ENCODE measurements at regions of chr6 and their contacts with region 1.

Region 1: GRCh38 chr6:27472617-27473400 is at the start of gene ZNF184:
- DNase-seq: peak; percentile 68 to 94 (median 80)
- ATAC-seq: peak; percentile 59
- H3K4me3 ChIP-seq: peak within 1 kb of the TSS; percentile 85
- H3K4me3 Mint-ChIP-seq: peak within 1 kb of the TSS; percentile 88
- H3K27ac ChIP-seq: peak within 1 kb of the TSS; percentile 88 to 96
- H3K27ac Mint-ChIP-seq: peak within 1 kb of the TSS; percentile 91
- H3K4me1 ChIP-seq: peaks cover 21% of the 10 kb centered on the region
- H3K4me1 Mint-ChIP-seq: peaks cover 53% of the 10 kb centered on the region
- H3K27me3 ChIP-seq: no peaks in the 10 kb centered on the region
- H3K27me3 Mint-ChIP-seq: no peaks in the 10 kb centered on the region
- CTCF ChIP-seq: no peak
- total RNA-seq, gene ZNF184: 19.6 to 21.1 TPM

Region 2: DNA sequence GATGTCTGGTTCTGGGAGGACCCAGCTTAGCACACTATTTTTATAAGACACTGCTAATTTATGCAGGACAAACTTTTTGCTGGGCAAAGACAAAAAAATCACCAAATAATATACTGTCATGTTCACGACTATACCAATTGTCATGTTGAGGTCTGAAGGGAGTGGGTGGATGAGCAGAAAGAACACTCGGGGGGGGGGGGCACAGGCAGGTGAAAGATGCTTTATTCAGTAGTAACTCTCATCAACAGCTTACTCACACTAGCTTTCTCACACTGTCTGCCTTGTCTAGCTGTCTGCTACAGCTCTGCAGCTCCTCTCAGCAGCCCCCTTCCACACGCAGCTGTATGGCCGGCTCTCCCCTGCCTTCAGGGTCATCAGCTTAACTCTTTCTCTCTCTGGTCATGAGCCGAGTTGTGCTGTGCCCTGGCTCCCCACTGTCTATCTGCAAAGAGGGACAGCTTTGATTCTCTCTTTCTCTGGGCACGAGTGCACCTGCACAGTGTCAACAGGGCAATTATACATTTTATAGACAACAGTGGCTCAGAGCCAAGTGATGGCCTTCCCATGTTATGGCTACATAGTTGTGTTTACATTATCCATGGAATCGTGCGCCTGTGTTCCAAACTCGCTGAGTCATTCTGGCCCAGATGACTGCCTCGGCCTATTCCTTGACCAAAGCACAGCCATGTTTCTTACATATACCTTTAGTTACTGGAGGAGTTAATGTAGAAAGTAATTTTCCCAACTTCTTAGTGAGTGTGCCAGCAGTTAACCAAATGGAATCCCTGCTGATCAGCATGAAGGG is 413.0 kb before region 1 on chr6:
- CTCF ChIA-PET with region 1: no interaction called
- POLR2A ChIA-PET with region 1: no interaction called
- intact Hi-C with region 1: no loop called
- DNase-seq: no peak
- ATAC-seq: no peak
- H3K4me3 ChIP-seq: no peak overlapping the region
- H3K4me3 Mint-ChIP-seq: no peak overlapping the region
- H3K27ac ChIP-seq: no peak overlapping the region
- H3K27ac Mint-ChIP-seq: no peak overlapping the region
- H3K4me1 ChIP-seq: no peaks in the 10 kb centered on the region
- H3K4me1 Mint-ChIP-seq: no peaks in the 10 kb centered on the region
- H3K27me3 ChIP-seq: peaks cover 0 to 16% of the 10 kb centered on the region in 2 experiments
- H3K27me3 Mint-ChIP-seq: peaks cover 54% of the 10 kb centered on the region
- CTCF ChIP-seq: no peak

Region 3: GRCh38 chr6:27312146-27312949 is 160.5 kb before region 1 on chr6 and contains the start of gene POM121L2:
- CTCF ChIA-PET with region 1: interaction called, 6 read pairs
- POLR2A ChIA-PET with region 1: no interaction called
- intact Hi-C with region 1: loop called in 1 of 2 experiments (anchors 5 kb)
- DNase-seq: peak; percentile 23 to 81 (median 52)
- ATAC-seq: peak; percentile 66
- H3K4me3 ChIP-seq: peak within 1 kb of the TSS; percentile 71
- H3K4me3 Mint-ChIP-seq: peak within 1 kb of the TSS; percentile 83
- H3K27ac ChIP-seq: no peak within 1 kb of the TSS
- H3K27ac Mint-ChIP-seq: no peak within 1 kb of the TSS
- H3K4me1 ChIP-seq: peaks cover 12% of the 10 kb centered on the region
- H3K4me1 Mint-ChIP-seq: peaks cover 6% of the 10 kb centered on the region
- H3K27me3 ChIP-seq: peaks cover 35 to 68% of the 10 kb centered on the region in 2 experiments
- H3K27me3 Mint-ChIP-seq: peaks cover 93% of the 10 kb centered on the region
- CTCF ChIP-seq: peak; percentile 82
- total RNA-seq, gene POM121L2: not detected

Region 4: DNA sequence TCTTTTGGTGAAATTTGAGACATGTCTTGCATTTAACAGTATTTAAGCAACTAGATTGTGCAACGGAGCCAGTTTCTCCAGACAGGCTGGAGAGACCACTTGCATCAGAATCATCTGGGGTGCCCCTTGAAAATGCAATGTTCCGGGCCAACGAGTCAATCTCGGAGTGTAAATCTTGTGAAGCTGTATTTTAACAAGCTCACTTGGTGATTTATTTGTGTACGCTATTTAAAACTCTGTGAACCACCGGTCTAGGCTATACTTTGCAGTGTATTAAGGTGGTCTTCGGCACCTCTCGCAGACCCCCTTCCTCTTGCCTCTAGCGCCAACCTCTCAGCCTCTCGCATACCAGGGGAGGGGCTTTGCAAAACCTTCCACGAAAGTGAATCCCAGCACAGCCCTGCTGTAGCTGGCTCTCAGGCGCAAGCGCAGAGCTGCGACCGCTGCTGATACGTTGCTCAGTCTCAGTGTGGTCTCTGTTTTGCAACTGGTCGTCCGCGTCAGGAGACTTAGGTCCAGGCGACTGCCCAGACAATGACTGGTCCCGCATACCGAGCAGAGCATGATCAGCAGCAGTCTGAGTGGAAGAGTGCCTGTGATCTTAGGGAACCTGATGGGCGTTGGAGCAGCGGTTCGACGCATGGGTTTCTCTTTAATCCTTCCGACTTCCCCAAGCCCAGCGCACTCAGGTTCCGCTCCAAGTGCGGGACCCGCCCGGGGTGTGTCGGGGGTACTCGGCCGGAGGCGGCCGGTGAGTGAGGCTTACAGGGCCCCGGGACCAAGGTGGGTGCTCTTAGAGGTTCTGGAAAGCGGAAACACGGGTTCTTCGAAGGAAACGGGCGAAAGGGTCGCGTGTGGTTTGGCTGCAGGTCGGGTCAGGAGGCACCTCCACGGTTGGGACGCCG is 84.3 kb before region 1 on chr6 and contains the start of gene ZNF391:
- CTCF ChIA-PET with region 1: no interaction called
- POLR2A ChIA-PET with region 1: interaction called, 13 read pairs
- intact Hi-C with region 1: loop called (anchors 5 kb)
- DNase-seq: peak; percentile 41 to 80 (median 58)
- ATAC-seq: peak; percentile 87
- H3K4me3 ChIP-seq: peak within 1 kb of the TSS; percentile 78
- H3K4me3 Mint-ChIP-seq: peak within 1 kb of the TSS; percentile 98
- H3K27ac ChIP-seq: no peak within 1 kb of the TSS
- H3K27ac Mint-ChIP-seq: peak within 1 kb of the TSS; percentile 90
- H3K4me1 ChIP-seq: peaks cover 13% of the 10 kb centered on the region
- H3K4me1 Mint-ChIP-seq: peaks cover 24% of the 10 kb centered on the region
- H3K27me3 ChIP-seq: no peaks in the 10 kb centered on the region
- H3K27me3 Mint-ChIP-seq: peaks cover 2% of the 10 kb centered on the region
- CTCF ChIP-seq: no peak
- total RNA-seq, gene ZNF391: 1.6 to 1.8 TPM

Region 5: DNA sequence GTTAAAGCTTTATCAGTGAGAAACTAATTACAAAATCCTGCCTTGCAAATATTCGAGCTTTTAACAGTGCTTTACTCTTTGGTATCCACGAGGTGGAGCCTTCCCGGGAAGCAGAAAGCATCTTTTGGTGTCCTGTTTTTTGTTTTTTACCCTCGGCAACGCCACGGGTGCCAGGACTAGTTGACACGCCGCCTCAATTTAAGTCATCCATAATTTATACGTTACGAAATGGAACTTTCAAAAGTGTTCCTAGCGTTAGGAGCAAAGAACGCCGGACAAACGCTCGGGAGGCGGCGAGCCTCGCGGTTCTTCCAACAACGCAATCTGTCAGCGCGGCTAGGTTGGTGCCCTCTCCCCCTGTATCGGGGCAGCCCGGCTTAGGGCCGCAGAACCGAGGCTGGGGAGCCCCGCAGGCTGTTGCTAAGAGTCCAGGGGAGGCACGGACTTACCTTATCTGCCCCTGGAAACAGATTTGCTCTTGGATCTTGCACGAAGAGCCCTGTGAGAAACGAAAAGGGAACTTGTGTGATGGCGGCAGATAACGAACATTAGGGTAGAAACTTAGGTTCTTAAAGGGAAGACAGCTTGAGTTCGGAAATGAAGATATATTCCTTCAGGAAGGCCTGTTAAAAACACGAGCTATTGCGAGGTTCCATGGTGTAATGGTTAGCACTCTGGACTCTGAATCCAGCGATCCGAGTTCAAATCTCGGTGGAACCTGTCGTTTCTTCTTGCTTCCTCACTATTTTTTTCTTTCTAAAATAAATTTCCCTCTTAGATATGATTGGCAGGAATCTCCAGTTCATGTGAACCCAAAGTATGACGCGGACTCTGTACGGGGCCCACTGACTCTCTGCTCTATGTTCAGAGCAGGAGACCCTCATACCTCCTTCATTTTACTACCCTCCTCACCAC is 46.3 kb after region 1 on chr6:
- CTCF ChIA-PET with region 1: interaction called, 7 read pairs
- POLR2A ChIA-PET with region 1: interaction called, 10 read pairs
- intact Hi-C with region 1: loop called (anchors 5 kb)
- DNase-seq: peak; percentile 33 to 89 (median 54)
- ATAC-seq: peak; percentile 84
- H3K4me3 ChIP-seq: peak overlapping the region; percentile 92
- H3K4me3 Mint-ChIP-seq: peak overlapping the region; percentile 91
- H3K27ac ChIP-seq: peak overlapping the region; percentile 17 to 76
- H3K27ac Mint-ChIP-seq: peak overlapping the region; percentile 89
- H3K4me1 ChIP-seq: peaks cover 12% of the 10 kb centered on the region
- H3K4me1 Mint-ChIP-seq: peaks cover 31% of the 10 kb centered on the region
- H3K27me3 ChIP-seq: peaks cover 7% of the 10 kb centered on the region in 2 experiments
- H3K27me3 Mint-ChIP-seq: peaks cover 28% of the 10 kb centered on the region
- CTCF ChIP-seq: peak; percentile 78

Region 6: GRCh38 chr6:28443112-28443773 is 970.4 kb after region 1 on chr6 and contains the start of gene ZSCAN23:
- CTCF ChIA-PET with region 1: no interaction called
- POLR2A ChIA-PET with region 1: no interaction called
- intact Hi-C with region 1: loop called in 1 of 2 experiments (anchors 10 kb)
- DNase-seq: peak; percentile 68 to 94 (median 80)
- ATAC-seq: peak; percentile 91
- H3K4me3 ChIP-seq: peak within 1 kb of the TSS; percentile 53
- H3K4me3 Mint-ChIP-seq: peak within 1 kb of the TSS; percentile 96
- H3K27ac ChIP-seq: no peak within 1 kb of the TSS
- H3K27ac Mint-ChIP-seq: peak within 1 kb of the TSS; percentile 77
- H3K4me1 ChIP-seq: peaks cover 19% of the 10 kb centered on the region
- H3K4me1 Mint-ChIP-seq: peaks cover 34% of the 10 kb centered on the region
- H3K27me3 ChIP-seq: peaks cover 19 to 28% of the 10 kb centered on the region in 2 experiments
- H3K27me3 Mint-ChIP-seq: peaks cover 37% of the 10 kb centered on the region
- CTCF ChIP-seq: no peak
- total RNA-seq, gene ZSCAN23: 0.19 to 0.78 TPM